ENCODE measurements at regions of chr2 and their contacts with region 1.

Region 1: GRCh38 chr2:121596221-121597080 is 52.8 kb downstream of the CLASP1 start:
- DNase-seq: peak in 1 of 2 experiments; percentile 54
- H3K4me3 ChIP-seq: no peak overlapping the region
- H3K4me3 Mint-ChIP-seq: peak overlapping the region; percentile 20
- H3K27ac Mint-ChIP-seq: peak overlapping the region; percentile 37
- H3K4me1 ChIP-seq: peaks cover 3% of the 10 kb centered on the region; the same call in 1 of the 2 replicates
- H3K4me1 Mint-ChIP-seq: peaks cover 10% of the 10 kb centered on the region
- H3K27me3 ChIP-seq: no peaks in the 10 kb centered on the region
- H3K27me3 Mint-ChIP-seq: no peaks in the 10 kb centered on the region
- CTCF ChIP-seq: peak in 1 of 2 experiments; percentile 64

Region 2: GRCh38 chr2:121649596-121650314 is 53.3 kb after region 1 on chr2:
- CTCF ChIA-PET with region 1: interaction called, 3 read pairs
- POLR2A ChIA-PET with region 1: no interaction called
- intact Hi-C with region 1: loop called (anchors 1 kb)
- DNase-seq: peak; percentile 95
- H3K4me3 ChIP-seq: peak overlapping the region; percentile 56
- H3K4me3 Mint-ChIP-seq: peak overlapping the region; percentile 78
- H3K27ac Mint-ChIP-seq: peak overlapping the region; percentile 95
- H3K4me1 ChIP-seq: 0 out of 2 replicates have a peak, but pooled peaks cover 10% of the 10 kb centered on the region
- H3K4me1 Mint-ChIP-seq: peaks cover 15% of the 10 kb centered on the region
- H3K27me3 ChIP-seq: no peaks in the 10 kb centered on the region
- H3K27me3 Mint-ChIP-seq: no peaks in the 10 kb centered on the region
- CTCF ChIP-seq: no peak

Region 3: DNA sequence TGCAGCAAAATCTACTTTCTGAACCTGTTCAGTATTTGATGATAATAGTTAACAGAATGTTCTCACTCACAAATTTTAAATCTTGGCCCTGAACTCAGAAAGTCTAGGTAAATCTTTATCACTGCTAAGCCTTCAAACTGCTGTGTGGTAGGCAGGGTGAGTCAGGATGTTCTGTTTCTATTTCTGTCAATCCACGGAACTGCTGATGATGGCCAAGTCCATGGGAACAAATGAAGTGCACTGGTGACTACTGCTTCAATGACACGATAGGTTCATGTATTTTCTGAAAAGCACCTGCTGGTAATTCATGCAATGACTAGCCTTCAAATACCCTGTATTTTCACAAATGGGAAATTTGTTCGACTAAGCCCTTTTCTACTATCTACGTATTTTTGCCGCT is 126.0 kb after region 1 on chr2:
- CTCF ChIA-PET with region 1: no interaction called
- POLR2A ChIA-PET with region 1: no interaction called
- intact Hi-C with region 1: loop called (anchors 1 kb)
- DNase-seq: no peak
- H3K4me3 ChIP-seq: no peak overlapping the region
- H3K4me3 Mint-ChIP-seq: no peak overlapping the region
- H3K27ac Mint-ChIP-seq: no peak overlapping the region
- H3K4me1 ChIP-seq: no peaks in the 10 kb centered on the region
- H3K4me1 Mint-ChIP-seq: no peaks in the 10 kb centered on the region
- H3K27me3 ChIP-seq: no peaks in the 10 kb centered on the region
- H3K27me3 Mint-ChIP-seq: no peaks in the 10 kb centered on the region
- CTCF ChIP-seq: no peak